Activated T-helper 1 cell treated with anti-CD3 and anti-CD28 coated beads, Interleukin-12 subunit alpha, Interleukin-12 subunit beta, Interleukin-2, Interleukin-4 antibody, amounts not matched to agents 30 ng/mL and 10 ng/mL and 1 ng/mL, durations not matched to agents 14 hours and 24 hours and 36 hours (primary cell): ENCODE measurements at regions of chr10 and their contacts with region 1.

Region 1: GRCh38 chr10:22420787-22421517 is 75.7 kb downstream of the SPAG6 start:
- DNase-seq: no peak
- H3K4me3 Mint-ChIP-seq: no peak overlapping the region
- H3K27ac Mint-ChIP-seq: no peak overlapping the region
- H3K4me1 Mint-ChIP-seq: peaks cover 4% of the 10 kb centered on the region
- H3K27me3 Mint-ChIP-seq: no peaks in the 10 kb centered on the region

Region 2: DNA sequence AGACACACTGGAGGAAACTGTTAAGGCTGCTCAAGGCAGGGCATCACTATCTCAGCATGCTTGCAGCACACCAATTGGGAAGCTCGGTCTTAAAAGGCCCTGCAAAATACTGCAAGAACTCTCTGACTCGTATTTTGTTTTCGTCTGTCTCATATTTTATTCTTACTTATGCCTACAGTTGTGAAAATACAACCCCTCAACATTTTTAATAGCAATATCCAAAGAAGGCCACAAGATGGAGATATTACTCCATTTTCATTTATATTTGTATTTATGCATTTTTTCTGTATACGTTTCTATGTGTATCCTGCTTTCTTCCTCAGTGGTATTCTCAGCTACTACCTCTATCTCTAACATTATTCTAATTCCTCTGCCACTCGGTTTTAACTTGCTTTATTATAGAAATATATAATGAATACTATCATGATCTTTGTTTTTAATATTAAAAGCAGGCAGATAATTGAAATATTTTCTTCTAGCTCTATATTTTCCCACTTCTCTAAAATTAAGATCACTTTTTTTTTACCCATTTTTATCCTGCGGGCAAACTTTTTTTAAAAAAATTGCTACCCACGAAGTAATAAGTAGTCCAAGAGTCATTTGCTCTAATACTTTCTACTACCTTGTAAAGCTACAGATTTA is 427.5 kb before region 1 on chr10:
- intact Hi-C with region 1: loop called (anchors 2 kb)
- DNase-seq: no peak
- H3K4me3 Mint-ChIP-seq: no peak overlapping the region
- H3K27ac Mint-ChIP-seq: no peak overlapping the region
- H3K4me1 Mint-ChIP-seq: peaks cover 29% of the 10 kb centered on the region
- H3K27me3 Mint-ChIP-seq: no peaks in the 10 kb centered on the region

Region 3: GRCh38 chr10:22436884-22437619 is 16.1 kb after region 1 on chr10:
- intact Hi-C with region 1: no loop called
- DNase-seq: peak; percentile 80
- H3K4me3 Mint-ChIP-seq: peak overlapping the region; percentile 91
- H3K27ac Mint-ChIP-seq: peak overlapping the region; percentile 96
- H3K4me1 Mint-ChIP-seq: peaks cover 49% of the 10 kb centered on the region
- H3K27me3 Mint-ChIP-seq: peaks cover 9% of the 10 kb centered on the region

Region 4: GRCh38 chr10:22704471-22704911 is 283.5 kb after region 1 on chr10:
- intact Hi-C with region 1: no loop called
- DNase-seq: no peak
- H3K4me3 Mint-ChIP-seq: no peak overlapping the region
- H3K27ac Mint-ChIP-seq: no peak overlapping the region
- H3K4me1 Mint-ChIP-seq: peaks cover 76% of the 10 kb centered on the region
- H3K27me3 Mint-ChIP-seq: no peaks in the 10 kb centered on the region

Region 5: GRCh38 chr10:22805283-22805682 is 384.3 kb after region 1 on chr10:
- intact Hi-C with region 1: no loop called
- DNase-seq: no peak
- H3K4me3 Mint-ChIP-seq: no peak overlapping the region
- H3K27ac Mint-ChIP-seq: no peak overlapping the region
- H3K4me1 Mint-ChIP-seq: no peaks in the 10 kb centered on the region
- H3K27me3 Mint-ChIP-seq: peaks cover 4% of the 10 kb centered on the region